Activated naive CD8-positive, alpha-beta T cell treated with anti-CD3 and anti-CD28 coated beads, Interleukin-2, amount 10 ng/mL, durations not matched to agents 7 days and 5 days (primary cell): ENCODE measurements at regions of chr22 and their contacts with region 1.

Region 1: DNA sequence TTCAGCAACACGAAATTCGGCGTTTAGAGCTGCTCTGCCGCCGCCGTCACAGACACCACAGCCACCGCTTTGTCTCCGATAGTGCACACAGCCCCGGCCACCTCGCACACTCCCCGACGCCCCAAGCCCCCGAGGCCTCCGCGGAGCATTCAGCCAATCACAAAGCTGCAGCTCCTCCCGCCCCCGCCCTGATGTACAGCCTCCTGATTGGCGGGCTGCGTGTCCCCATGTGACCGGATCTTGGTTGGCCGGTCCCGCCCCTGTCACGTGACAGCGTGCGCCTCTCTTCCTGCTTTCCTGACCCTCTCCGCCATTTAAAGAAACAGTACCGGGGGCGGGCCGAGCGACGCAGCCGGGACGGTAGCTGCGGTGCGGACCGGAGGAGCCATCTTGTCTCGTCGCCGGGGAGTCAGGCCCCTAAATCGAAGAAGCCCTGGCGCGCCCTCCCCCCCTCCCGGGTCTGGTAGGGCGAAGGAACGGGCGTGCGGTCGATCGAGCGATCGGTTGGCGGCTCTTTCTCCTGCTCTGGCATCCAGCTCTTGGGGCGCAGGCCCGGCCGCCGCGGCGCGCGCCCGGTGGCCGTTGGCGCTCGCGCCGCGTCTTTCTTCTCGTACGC is at the start of gene TUG1:
- DNase-seq: peak; percentile 95
- ATAC-seq: peak; percentile 93
- H3K4me3 Mint-ChIP-seq: peak within 1 kb of the TSS; percentile 97
- H3K27ac Mint-ChIP-seq: peak within 1 kb of the TSS; percentile 99
- H3K4me1 Mint-ChIP-seq: peaks cover 40% of the 10 kb centered on the region
- H3K27me3 Mint-ChIP-seq: no peaks in the 10 kb centered on the region
- total RNA-seq, gene TUG1: 94.7 to 100 TPM

Region 2: DNA sequence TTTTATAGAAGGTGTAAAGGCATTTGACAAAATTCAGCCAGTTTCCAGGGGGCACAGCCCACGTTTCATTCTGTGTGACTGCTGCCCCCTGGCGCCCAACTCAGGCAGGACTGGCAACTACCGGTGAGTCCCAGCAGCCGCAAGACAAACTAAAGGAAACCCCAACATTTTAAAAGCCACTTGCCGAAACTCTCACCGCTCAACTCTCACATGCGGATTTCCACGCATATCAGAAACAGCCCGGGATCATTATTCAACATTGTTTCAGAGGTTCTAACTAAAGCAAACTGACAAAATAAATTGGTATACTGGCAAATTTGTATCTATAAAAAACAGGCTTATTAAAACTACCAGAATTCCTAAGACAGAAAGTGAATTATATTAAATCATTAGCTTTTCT is 48.6 kb before region 1 on chr22:
- POLR2A ChIA-PET with region 1: interaction called, 14 read pairs
- DNase-seq: peak; percentile 87
- ATAC-seq: peak; percentile 62
- H3K4me3 Mint-ChIP-seq: peak overlapping the region; percentile 60
- H3K27ac Mint-ChIP-seq: no peak overlapping the region
- H3K4me1 Mint-ChIP-seq: peaks cover 13% of the 10 kb centered on the region
- H3K27me3 Mint-ChIP-seq: no peaks in the 10 kb centered on the region

Region 3: DNA sequence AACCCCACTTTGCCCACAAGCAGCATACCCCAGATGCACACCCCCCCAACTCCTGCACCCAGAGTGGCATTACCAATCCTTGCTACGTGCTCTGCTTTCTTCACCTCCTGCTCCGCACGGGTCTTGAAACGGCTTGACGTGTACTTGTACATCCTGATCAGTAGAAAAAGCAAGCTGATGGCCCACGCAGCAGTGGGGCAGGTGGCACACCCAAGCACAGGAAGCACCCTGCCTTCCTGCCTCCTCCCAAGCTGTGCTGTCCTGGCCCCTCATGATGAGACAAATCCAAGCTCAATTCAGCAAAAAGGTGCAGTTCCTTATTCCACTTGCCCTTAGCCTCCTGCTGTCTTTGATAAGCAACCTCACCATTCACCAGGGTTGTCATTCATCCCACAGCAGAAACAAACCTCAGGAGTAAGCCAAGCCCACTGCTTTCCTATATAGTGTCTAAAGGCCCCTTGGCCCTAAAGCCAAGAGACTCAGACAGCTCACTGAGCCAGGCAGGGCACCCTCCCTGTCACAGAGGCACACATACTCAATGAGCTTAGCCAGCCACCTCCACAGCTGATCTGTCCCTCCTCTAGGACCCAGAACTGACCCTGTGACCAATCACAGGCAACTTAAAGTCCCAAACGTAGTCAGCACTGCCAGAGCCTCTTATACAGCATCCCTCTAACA is 28.2 kb before region 1 on chr22:
- POLR2A ChIA-PET with region 1: interaction called, 39 read pairs
- DNase-seq: peak; percentile 50
- ATAC-seq: peak; percentile 72
- H3K4me3 Mint-ChIP-seq: peak overlapping the region; percentile 76
- H3K27ac Mint-ChIP-seq: peak overlapping the region; percentile 95
- H3K4me1 Mint-ChIP-seq: peaks cover 46% of the 10 kb centered on the region
- H3K27me3 Mint-ChIP-seq: no peaks in the 10 kb centered on the region

Region 4: DNA sequence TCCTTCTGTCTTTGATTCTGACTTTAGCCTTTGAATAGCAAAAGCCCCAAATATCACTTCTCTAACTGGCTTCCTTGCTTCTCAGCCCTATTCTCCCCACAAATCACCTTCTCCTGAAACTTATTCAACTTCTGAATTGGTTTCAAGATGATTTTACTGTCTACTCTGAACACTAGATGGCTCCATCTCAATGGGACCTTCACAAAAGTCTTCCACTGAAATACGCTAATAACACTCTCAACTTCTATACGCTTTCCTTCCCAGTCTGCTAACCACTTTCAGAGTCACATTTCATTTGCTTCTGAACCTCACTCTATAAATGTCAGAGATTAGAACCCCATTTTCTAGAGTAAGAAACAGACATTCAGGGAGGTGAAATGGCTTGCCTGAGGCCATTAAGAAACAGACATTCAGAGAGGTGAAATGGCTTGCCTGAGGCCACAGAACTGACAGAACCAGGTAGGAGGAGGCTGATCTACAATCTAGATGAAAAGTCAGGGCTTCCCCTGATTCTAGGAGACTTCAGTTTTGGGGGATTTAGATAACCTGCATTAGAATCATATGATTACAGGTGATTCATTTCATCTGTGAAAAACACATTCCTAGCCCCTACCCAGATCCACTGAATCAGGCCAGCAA is 21.1 kb before region 1 on chr22:
- POLR2A ChIA-PET with region 1: interaction called, 23 read pairs
- DNase-seq: no peak
- ATAC-seq: no peak
- H3K4me3 Mint-ChIP-seq: no peak overlapping the region
- H3K27ac Mint-ChIP-seq: no peak overlapping the region
- H3K4me1 Mint-ChIP-seq: peaks cover 40% of the 10 kb centered on the region
- H3K27me3 Mint-ChIP-seq: no peaks in the 10 kb centered on the region

Region 5: GRCh38 chr22:30979932-30980331 is 10.9 kb after region 1 on chr22:
- POLR2A ChIA-PET with region 1: interaction called, 33 read pairs
- DNase-seq: no peak
- ATAC-seq: no peak
- H3K4me3 Mint-ChIP-seq: no peak overlapping the region
- H3K27ac Mint-ChIP-seq: no peak overlapping the region
- H3K4me1 Mint-ChIP-seq: peaks cover 20% of the 10 kb centered on the region
- H3K27me3 Mint-ChIP-seq: peaks cover 2% of the 10 kb centered on the region

Region 6: DNA sequence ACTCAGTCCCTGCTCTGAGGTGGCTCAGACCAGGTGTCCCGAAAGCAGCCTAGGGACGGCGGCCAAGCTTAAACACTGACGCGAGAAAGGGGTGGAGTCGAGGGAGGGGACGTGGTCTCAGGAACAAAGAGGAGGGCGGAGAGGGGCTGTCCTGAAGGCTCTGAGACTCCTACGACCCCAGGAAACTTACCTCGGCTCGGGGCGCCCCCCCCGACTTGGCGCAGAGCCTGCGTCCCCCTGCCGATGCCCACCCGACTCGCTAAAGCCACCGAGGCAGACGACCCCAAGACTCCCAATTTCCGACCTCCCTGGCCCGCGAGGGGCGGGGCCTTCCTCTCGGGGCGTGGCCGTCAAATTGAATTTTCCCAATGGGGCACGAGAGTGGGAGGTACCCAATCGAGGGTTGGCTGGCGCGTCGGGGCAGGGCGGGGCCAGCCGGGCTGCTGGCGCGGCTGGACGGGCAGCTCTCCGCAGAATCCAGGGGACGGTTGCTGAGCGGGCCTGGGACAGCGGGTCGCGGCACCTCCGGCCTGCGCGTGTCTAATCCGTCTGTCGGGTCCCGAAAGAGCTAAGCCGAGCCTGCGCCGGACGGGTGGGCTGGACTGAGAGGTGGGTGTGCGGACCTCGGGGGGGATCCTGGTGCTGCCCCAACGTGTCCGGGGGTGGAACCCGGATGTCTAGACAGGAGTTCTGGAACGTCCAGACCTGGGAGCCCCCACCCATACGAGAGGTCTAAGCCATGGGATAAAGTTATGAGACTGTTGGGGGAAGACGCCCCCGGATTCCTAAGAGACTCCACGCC is 112.0 kb after region 1 on chr22 and contains the start of gene SMTN:
- POLR2A ChIA-PET with region 1: interaction called, 62 read pairs
- DNase-seq: peak; percentile 96
- ATAC-seq: peak; percentile 68
- H3K4me3 Mint-ChIP-seq: peak within 1 kb of the TSS; percentile 91
- H3K27ac Mint-ChIP-seq: peak within 1 kb of the TSS; percentile 85
- H3K4me1 Mint-ChIP-seq: peaks cover 31% of the 10 kb centered on the region
- H3K27me3 Mint-ChIP-seq: no peaks in the 10 kb centered on the region
- total RNA-seq, gene SMTN: 39.9 to 45.8 TPM

Region 7: DNA sequence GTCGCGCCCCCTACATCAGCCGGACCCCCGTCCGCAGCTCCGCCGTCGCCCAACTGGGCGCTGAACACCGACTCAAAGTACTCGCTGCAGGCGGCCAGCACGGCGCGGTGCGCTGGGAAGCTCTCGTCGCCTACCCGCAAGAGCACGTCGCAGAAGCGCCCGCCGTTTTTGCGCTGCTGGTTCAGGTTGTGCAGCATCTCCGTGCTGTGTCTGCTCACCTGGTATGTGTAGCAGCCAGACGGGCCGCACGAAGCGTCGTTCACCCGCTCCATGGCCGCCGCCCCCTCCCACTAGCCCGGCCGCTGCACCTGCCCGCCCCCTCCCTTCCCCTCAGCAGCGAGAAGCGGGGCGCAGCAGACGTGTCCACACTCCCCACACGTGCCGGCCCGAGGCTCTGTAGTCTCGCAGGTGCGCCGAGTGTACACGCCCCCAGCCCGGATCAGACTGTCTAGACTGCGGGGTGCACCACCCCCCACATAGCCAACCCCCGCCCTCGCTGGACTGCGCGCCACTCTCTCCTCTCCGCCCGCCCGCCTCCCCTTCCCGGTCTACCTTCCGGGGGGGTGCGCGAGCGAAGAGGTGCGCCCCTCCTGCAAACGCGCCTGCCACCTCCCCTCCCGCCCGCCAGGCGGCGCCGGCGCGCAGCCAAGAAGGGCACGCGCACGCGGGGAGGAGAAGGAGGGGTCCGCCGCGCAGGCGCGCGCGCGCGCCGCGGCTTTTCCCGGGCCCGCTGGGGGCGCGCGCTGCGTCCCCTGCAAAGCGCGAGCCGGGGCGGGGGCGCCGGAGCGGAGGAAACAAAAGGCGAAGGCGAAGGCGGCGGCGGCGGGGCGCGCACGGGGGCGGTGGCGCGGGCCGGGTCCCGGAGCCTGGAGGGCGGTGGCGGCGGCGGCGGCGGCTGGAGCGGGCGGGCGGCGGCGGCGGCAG is 376.6 kb after region 1 on chr22:
- POLR2A ChIA-PET with region 1: interaction called, 14 read pairs
- DNase-seq: peak; percentile 95
- ATAC-seq: peak; percentile 54
- H3K4me3 Mint-ChIP-seq: peak overlapping the region; percentile 86
- H3K27ac Mint-ChIP-seq: peak overlapping the region; percentile 88
- H3K4me1 Mint-ChIP-seq: peaks cover 44% of the 10 kb centered on the region
- H3K27me3 Mint-ChIP-seq: no peaks in the 10 kb centered on the region